IMR-90 (cell line): ENCODE measurements at regions of chr5 and their contacts with region 1.

Region 1: DNA sequence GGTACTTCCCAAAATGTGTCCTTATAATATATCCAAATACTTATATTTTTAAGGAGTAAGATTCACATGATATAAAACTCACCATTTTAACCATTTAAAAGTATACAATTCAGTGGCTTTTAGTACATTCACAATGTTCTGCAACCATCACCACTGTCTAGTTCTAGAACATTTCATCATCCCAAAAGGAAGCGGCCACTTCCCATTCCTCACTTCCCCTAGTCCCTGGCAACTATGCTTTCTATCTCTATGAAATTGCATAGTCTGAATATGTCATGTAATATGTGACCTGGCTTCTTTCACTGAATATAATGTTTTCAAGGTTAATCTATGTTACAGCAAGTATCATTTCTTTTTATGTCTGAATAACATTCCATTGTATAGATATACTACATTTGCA is 615.1 kb upstream of the SGCD start:
- DNase-seq: no peak
- ATAC-seq: no peak
- H3K4me3 ChIP-seq: no peak overlapping the region
- H3K27ac ChIP-seq: no peak overlapping the region
- H3K4me1 ChIP-seq: no peaks in the 10 kb centered on the region
- H3K27me3 ChIP-seq: no peaks in the 10 kb centered on the region
- CTCF ChIP-seq: no peak
- POLR2A ChIP-seq: no peak
- RAD21 ChIP-seq: no peak

Region 2: DNA sequence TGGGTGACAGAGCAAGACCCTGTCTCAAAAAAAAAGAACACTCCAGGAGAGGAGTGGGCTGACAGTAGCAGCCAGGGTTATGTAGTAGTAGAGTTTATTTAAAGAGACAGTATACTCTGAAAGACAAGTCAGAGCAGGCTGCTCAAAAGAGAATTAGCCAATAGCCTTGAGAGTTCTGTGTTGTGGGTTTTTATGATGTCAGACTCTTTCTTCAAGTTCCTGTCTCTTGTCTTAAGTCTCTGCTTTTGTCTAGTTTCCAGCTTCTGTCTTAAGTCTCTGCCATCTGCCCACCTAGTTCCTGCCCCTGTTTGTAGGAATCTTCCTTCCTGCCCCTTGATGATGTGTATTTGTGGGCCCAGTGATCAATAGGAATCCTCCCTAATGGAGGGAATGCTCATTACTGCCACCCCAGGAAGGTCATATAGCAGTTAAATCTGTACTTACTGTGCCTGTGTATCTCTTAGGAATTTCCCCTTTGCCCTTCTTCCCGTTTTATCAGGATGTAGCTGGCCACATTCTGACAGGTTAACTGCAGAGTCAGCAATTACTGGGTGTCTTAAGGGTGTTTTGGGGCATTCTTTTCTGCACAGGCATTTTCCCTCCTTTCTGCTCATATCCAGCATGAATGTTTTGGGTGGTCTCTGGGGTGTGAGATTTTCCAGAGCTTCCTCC is 34.6 kb after region 1 on chr5:
- CTCF ChIA-PET with region 1: no interaction called
- POLR2A ChIA-PET with region 1: no interaction called
- dilution Hi-C with region 1: no loop called
- in situ Hi-C with region 1: no loop called
- intact Hi-C with region 1: loop called (anchors 2 kb)
- DNase-seq: no peak
- ATAC-seq: no peak
- H3K4me3 ChIP-seq: no peak overlapping the region
- H3K27ac ChIP-seq: no peak overlapping the region
- H3K4me1 ChIP-seq: no peaks in the 10 kb centered on the region
- H3K27me3 ChIP-seq: no peaks in the 10 kb centered on the region
- CTCF ChIP-seq: no peak
- POLR2A ChIP-seq: no peak
- RAD21 ChIP-seq: no peak